Calu3 (cell line): ENCODE measurements at regions of chr13 and their contacts with region 1.

Region 1: GRCh38 chr13:79423801-79424642 is 18.0 kb upstream of the RBM26 start:
- DNase-seq: no peak
- H3K4me3 Mint-ChIP-seq: no peak overlapping the region
- H3K27ac Mint-ChIP-seq: no peak overlapping the region
- H3K4me1 Mint-ChIP-seq: no peaks in the 10 kb centered on the region
- H3K27me3 Mint-ChIP-seq: no peaks in the 10 kb centered on the region
- CTCF ChIP-seq: no peak

Region 2: GRCh38 chr13:79541426-79542049 is 117.5 kb after region 1 on chr13:
- CTCF ChIA-PET with region 1: interaction called, 19 read pairs
- intact Hi-C with region 1: loop called (anchors 1 kb)
- DNase-seq: peak; percentile 0
- H3K4me3 Mint-ChIP-seq: no peak overlapping the region
- H3K27ac Mint-ChIP-seq: no peak overlapping the region
- H3K4me1 Mint-ChIP-seq: no peaks in the 10 kb centered on the region
- H3K27me3 Mint-ChIP-seq: no peaks in the 10 kb centered on the region
- CTCF ChIP-seq: no peak